Ovary (tissue), 10 donors: ENCODE measurements at regions of chr10 and their contacts with region 1.

Region 1: GRCh38 chr10:118241229-118242137 is 100.6 kb downstream of the FAM204A start:
- DNase-seq: peak; percentile 76 to 90 (median 89)
- H3K4me3 ChIP-seq: no peak overlapping the region
- H3K27ac ChIP-seq: no peak overlapping the region
- H3K4me1 ChIP-seq: no peaks in the 10 kb centered on the region
- H3K27me3 ChIP-seq: no peaks in the 10 kb centered on the region
- CTCF ChIP-seq: peak; percentile 81 to 92 (median 85)
- EP300 ChIP-seq: no peak
- POLR2A ChIP-seq: no peak

Region 2: GRCh38 chr10:117216611-117217195 is 1024.8 kb before region 1 on chr10:
- intact Hi-C with region 1: loop called in 1 of 4 experiments (anchors 10 kb)
- DNase-seq: peak; percentile 68 to 86 (median 82)
- H3K4me3 ChIP-seq: peak overlapping the region; percentile 40
- H3K27ac ChIP-seq: no peak overlapping the region
- H3K4me1 ChIP-seq: peaks cover 5% of the 10 kb centered on the region
- H3K27me3 ChIP-seq: no peaks in the 10 kb centered on the region
- CTCF ChIP-seq: peak; percentile 97 to 100 (median 100)
- EP300 ChIP-seq: no peak
- POLR2A ChIP-seq: no peak

Region 3: DNA sequence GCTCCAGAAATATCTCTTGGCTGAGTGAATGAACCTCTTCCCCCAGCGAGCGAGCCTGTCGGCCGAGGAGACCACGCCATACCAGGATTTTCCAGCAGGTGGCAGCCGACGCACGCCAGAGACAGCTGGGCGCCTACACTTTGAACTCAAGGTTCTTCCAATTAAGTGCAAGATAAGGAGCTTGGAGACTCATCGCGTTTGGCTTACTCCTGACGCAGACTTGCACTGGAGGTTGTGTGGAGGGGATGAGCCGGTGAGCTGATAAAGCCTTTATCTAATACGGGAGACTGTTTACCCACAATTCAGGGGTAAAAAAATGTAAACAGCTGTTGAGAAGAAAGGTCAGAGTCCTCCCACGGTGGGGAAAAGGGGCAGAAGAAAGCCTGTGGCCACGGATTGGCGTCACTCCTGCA is 744.9 kb before region 1 on chr10:
- intact Hi-C with region 1: loop called in 3 of 4 experiments (anchors 2 to 10 kb)
- DNase-seq: peak; percentile 77 to 92 (median 86)
- H3K4me3 ChIP-seq: no peak overlapping the region
- H3K27ac ChIP-seq: peak overlapping the region in 1 of 2 donors; percentile 15
- H3K4me1 ChIP-seq: peaks cover 2% of the 10 kb centered on the region
- H3K27me3 ChIP-seq: no peaks in the 10 kb centered on the region
- CTCF ChIP-seq: peak; percentile 83 to 90 (median 89)
- EP300 ChIP-seq: no peak
- POLR2A ChIP-seq: no peak

Region 4: GRCh38 chr10:117503244-117504205 is 738.0 kb before region 1 on chr10:
- intact Hi-C with region 1: loop called in 2 of 4 experiments (anchors 10 kb)
- DNase-seq: peak in 1 of 5 donors; percentile 15
- H3K4me3 ChIP-seq: no peak overlapping the region
- H3K27ac ChIP-seq: no peak overlapping the region
- H3K4me1 ChIP-seq: peaks cover 4% of the 10 kb centered on the region
- H3K27me3 ChIP-seq: no peaks in the 10 kb centered on the region
- CTCF ChIP-seq: no peak
- EP300 ChIP-seq: no peak
- POLR2A ChIP-seq: no peak

Region 5: DNA sequence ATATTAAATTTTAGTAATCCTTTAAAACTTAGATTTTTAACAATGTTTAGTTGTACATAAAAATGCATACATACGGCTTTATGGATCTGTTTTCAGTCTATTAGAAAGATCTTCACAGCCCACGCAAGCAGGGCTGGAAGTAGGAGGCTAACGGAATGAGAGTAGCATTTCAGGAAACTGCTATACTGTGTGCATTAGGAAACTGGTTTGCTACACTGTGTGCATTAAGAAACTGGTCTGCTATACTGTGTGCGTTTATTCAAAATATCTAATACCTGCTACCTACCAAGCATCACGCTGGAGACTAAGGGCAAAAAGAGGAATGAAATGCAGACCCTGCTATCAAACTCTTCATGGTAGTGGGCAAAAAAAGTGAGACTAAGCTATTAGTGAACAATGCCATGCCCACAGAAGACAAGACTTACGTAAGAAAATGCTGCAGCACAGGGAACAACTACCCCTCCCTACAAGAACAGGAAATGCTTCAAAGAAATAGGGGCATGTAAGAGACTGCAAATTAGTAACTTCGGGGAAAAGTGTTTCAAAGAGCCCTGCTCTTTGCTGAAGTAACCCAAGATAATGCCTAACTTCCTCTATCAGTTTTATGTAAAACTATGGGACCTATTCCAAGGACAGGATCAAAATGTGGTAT is 206.0 kb before region 1 on chr10:
- intact Hi-C with region 1: loop called in 1 of 4 experiments (anchors 10 kb)
- DNase-seq: no peak
- H3K4me3 ChIP-seq: no peak overlapping the region
- H3K27ac ChIP-seq: no peak overlapping the region
- H3K4me1 ChIP-seq: peaks cover 9% of the 10 kb centered on the region
- H3K27me3 ChIP-seq: no peaks in the 10 kb centered on the region
- CTCF ChIP-seq: no peak
- EP300 ChIP-seq: no peak
- POLR2A ChIP-seq: no peak